ENCODE measurements at regions of chr22 and their contacts with region 1.

Region 1: GRCh38 chr22:23893943-23894709 is at the start of gene MIF:
- DNase-seq: peak; percentile 97 to 98
- ATAC-seq: peak; percentile 95
- H3K4me3 ChIP-seq: peak within 1 kb of the TSS; percentile 60 to 62
- H3K27ac ChIP-seq: peak within 1 kb of the TSS in 1 of 2 donors; percentile 90
- H3K4me1 ChIP-seq: no peaks in the 10 kb centered on the region
- H3K27me3 ChIP-seq: no peaks in the 10 kb centered on the region
- total RNA-seq, gene MIF: 278 to 316 TPM

Region 2: DNA sequence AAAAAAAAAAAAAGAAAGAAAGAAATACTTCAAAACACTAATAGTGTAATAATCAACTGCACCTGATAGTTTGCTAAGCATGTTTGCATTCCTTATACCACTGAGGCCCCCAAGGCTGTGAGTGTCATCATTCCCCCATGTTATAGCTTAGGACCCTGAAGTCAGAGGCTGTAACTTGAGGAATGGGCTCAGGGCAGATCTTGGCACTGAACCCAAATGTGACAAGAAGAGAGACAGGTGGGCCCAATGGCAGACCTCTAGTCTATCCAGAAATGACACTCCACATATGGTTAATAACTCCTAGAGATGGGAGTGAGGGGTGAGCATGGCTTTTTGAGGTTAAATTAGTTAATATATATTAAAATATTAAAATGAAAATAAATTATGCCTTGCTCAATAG is 156.4 kb before region 1 on chr22:
- intact Hi-C with region 1: no loop called
- DNase-seq: no peak
- ATAC-seq: no peak
- H3K4me3 ChIP-seq: no peak overlapping the region
- H3K27ac ChIP-seq: no peak overlapping the region
- H3K4me1 ChIP-seq: no peaks in the 10 kb centered on the region
- H3K27me3 ChIP-seq: no peaks in the 10 kb centered on the region

Region 3: GRCh38 chr22:23857606-23858483 is 36.3 kb before region 1 on chr22 and contains the start of gene SLC2A11:
- intact Hi-C with region 1: loop called in 1 of 2 experiments (anchors 5 kb)
- DNase-seq: peak; percentile 99
- ATAC-seq: peak; percentile 98
- H3K4me3 ChIP-seq: peak within 1 kb of the TSS; percentile 23 to 73
- H3K27ac ChIP-seq: peak within 1 kb of the TSS; percentile 8 to 80
- H3K4me1 ChIP-seq: peaks cover 0 to 2% of the 10 kb centered on the region in 2 donors
- H3K27me3 ChIP-seq: no peaks in the 10 kb centered on the region
- total RNA-seq, gene SLC2A11: 4.8 to 14.4 TPM

Region 4: DNA sequence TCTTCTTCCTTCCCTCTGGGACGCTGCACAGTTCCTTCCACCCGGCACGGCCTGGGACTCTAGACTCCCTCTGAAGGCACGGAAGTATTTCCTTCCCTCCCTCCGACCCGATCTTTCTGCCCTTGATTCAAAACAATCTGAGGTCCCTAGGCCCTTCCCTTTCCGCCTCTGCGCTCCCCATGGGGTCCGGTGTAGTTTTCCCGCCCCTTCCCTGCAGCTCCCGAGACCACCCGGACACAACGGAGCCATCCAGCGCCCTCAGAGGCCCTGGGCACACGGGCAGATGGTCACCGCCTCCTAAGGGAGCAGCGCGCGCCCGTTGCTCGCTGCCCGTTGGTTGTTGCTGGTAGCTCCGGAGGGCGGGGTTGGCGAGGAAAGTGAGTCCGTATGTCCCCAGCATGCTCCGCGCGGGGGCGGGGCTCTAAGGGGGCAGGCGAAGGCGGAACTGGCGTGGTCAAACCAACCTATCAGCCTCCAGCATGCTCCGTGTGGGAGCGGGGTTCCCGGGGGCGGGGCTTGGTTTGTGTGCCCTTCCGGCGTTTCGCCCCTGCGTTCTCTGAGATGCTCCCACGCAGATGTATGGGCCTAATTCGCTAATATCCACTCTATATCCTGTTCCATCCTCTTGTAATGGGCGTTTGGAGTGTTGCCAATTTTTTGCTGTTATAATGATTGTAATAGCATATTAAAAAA is 19.7 kb after region 1 on chr22:
- intact Hi-C with region 1: loop called in 1 of 2 experiments (anchors 1 kb)
- DNase-seq: peak; percentile 100
- ATAC-seq: peak; percentile 99
- H3K4me3 ChIP-seq: no peak overlapping the region
- H3K27ac ChIP-seq: peak overlapping the region in 1 of 2 donors; percentile 78
- H3K4me1 ChIP-seq: peaks cover 0 to 3% of the 10 kb centered on the region in 2 donors
- H3K27me3 ChIP-seq: no peaks in the 10 kb centered on the region